ENCODE measurements at regions of chr1 and their contacts with region 1.

Region 1: GRCh38 chr1:212608209-212608955 is at the start of gene ATF3:
- DNase-seq: peak; percentile 99
- ATAC-seq: peak; percentile 91
- H3K4me3 ChIP-seq: peak within 1 kb of the TSS; percentile 77
- H3K27ac ChIP-seq: peak within 1 kb of the TSS; percentile 78
- H3K4me1 ChIP-seq: peaks cover 14% of the 10 kb centered on the region
- H3K27me3 ChIP-seq: peaks cover 42% of the 10 kb centered on the region
- CTCF ChIP-seq: no peak
- POLR2A ChIP-seq: peak; percentile 99
- RAD21 ChIP-seq: 0 out of 2 replicates have a peak, but pooled peaks have one; percentile 10
- total RNA-seq, gene ATF3: 9.9 and 15.0 TPM in 2 replicates

Region 2: DNA sequence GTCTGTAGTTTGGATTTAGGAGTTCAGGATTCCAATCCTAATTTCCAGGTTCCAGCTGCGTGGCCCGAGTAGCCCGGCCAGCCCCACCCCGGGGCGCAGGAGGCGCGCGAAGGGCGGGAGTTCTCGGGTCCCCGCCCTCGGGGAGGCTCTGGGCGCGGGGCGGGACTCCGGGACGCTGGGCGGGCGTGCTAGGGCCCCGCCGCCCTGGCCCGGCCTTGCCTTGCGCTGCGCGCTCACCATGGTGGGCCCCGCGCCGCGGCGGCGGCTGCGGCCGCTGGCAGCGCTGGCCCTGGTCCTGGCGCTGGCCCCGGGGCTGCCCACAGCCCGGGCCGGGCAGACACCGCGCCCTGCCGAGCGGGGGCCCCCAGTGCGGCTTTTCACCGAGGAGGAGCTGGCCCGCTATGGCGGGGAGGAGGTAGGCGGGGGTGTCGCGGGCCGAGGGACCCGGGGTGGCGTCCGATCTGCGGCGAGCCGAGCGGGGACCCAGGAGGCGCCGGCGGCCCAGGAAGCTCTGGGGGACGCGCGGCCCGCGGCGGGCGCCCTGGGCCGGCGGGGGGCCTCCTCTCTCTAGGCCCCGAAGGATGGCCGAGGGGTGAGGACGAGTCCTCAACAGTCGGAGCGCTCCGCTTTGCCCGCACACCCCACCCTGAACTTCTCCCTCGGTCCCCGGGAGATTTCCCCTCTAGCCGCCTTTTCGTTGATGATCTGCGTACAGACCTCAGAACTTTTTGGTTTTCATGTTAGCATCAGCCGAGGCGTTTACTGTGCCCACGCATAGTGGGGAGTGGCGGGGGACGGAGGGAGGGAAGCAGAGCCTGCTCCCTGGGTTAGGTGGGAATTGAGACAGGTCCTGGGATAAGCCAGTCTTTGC is 175.4 kb before region 1 on chr1 and contains the start of gene NENF:
- CTCF ChIA-PET with region 1: no interaction called
- POLR2A ChIA-PET with region 1: no interaction called
- dilution Hi-C with region 1: no loop called
- in situ Hi-C with region 1: no loop called
- intact Hi-C with region 1: no loop called
- DNase-seq: peak; percentile 72
- ATAC-seq: peak; percentile 99
- H3K4me3 ChIP-seq: peak within 1 kb of the TSS; percentile 67
- H3K27ac ChIP-seq: peak within 1 kb of the TSS; percentile 48
- H3K4me1 ChIP-seq: peaks cover 13% of the 10 kb centered on the region; the same call in 1 of the 2 replicates
- H3K27me3 ChIP-seq: no peaks in the 10 kb centered on the region
- CTCF ChIP-seq: no peak
- POLR2A ChIP-seq: peak; percentile 47; the same call in 1 of the 2 replicates
- RAD21 ChIP-seq: no peak
- total RNA-seq, gene NENF: 15.0 and 16.0 TPM in 2 replicates

Region 3: DNA sequence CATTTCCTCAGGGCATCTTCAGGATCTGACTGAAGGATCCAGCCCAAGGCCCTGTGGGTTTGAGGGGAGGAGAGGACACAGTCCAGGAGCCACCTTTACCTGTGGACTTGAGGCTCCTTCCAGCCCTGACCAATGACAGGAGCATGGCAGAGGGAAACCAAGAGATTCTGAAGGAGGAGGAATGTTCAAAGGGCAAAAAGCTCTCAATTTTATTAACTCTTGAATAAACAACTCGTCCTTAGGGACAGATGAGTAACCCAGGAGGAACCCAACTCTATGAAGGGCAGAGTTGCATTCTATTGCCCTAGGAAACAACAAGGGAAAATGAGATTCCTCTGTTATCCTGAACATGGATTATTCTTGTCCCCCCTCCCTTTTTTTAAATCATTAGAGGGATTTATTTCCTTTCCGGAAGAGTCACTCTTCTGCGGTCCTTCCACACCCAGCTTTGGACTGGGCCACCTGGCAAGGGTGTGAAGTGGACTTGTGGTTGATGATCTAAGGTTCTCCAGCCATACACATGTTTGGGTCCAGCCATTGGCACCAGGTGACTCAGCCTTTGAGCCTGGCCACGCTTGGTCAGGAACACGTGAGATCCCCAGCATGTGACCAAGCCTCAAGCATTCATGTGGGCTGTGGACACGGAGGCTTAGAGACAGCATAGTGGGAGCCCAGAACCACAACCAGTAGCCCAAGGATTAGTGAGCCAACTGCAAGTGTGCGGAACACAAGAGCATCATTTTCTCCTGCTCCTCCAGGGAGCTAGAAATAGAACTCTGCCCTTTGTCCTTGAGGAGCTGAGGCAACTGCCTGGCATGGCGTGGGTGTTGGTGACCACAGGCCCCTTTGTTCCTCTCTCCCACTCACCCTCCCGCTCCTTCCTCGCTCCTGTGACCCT is 125.7 kb before region 1 on chr1:
- CTCF ChIA-PET with region 1: interaction called, 12 read pairs
- POLR2A ChIA-PET with region 1: interaction called, 5 read pairs
- dilution Hi-C with region 1: no loop called
- in situ Hi-C with region 1: no loop called
- intact Hi-C with region 1: loop called (anchors 1 kb)
- DNase-seq: peak; percentile 51
- ATAC-seq: peak; percentile 45
- H3K4me3 ChIP-seq: no peak overlapping the region
- H3K27ac ChIP-seq: no peak overlapping the region
- H3K4me1 ChIP-seq: peaks cover 18% of the 10 kb centered on the region
- H3K27me3 ChIP-seq: no peaks in the 10 kb centered on the region
- CTCF ChIP-seq: no peak
- POLR2A ChIP-seq: no peak
- RAD21 ChIP-seq: no peak

Region 4: DNA sequence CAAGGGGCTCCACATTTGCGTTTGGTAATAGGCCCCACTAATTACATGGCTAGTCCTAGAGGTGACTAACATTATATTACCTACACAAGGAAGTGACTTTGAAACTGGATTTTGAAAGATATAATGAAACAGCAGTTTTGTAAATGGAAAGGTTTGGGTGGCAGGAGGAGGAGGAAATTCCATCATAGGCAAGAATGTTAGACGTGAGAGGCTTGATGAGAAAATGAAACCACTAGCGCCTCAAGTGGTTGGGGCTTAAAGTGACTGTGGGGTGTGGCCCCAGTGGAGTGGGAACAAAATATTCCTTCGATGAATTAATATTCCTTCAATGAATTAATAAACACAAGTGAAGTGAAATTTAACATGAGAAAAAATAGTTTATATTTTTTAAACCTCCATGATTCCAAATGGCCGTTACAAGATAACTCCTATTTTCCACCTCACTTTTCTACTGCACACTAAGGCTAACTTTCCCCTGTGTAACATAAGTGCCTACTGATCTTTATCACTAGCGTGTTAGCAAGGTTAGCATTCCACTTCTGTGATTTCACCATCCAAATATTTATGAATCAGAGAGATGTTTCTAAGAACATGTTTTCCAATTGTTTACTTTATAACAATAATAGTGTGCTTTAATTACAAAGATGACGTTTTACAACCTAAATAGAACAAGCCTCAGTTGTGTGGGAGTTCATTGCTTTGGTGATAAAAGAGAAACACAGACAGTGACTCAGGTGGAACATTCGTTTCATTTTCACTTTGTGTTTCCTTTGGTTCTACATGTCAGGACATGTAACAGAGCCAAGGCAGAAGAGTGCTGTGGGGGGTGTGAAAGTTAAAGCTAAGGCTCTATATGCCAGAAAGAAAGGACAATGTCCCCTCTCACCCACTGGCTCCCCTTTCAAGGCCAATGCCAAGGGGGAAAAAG is 12.3 kb before region 1 on chr1:
- CTCF ChIA-PET with region 1: interaction called, 4 read pairs
- POLR2A ChIA-PET with region 1: interaction called, 7 read pairs
- dilution Hi-C with region 1: no loop called
- in situ Hi-C with region 1: no loop called
- intact Hi-C with region 1: loop called (anchors 1 kb)
- DNase-seq: peak; percentile 99
- ATAC-seq: peak; percentile 90
- H3K4me3 ChIP-seq: peak overlapping the region; percentile 31; the same call in 1 of the 2 replicates
- H3K27ac ChIP-seq: peak overlapping the region; percentile 98
- H3K4me1 ChIP-seq: peaks cover 10% of the 10 kb centered on the region
- H3K27me3 ChIP-seq: peaks cover 9% of the 10 kb centered on the region
- CTCF ChIP-seq: peak; percentile 75
- POLR2A ChIP-seq: peak; percentile 14; the same call in 1 of the 2 replicates
- RAD21 ChIP-seq: peak; percentile 68

Region 5: DNA sequence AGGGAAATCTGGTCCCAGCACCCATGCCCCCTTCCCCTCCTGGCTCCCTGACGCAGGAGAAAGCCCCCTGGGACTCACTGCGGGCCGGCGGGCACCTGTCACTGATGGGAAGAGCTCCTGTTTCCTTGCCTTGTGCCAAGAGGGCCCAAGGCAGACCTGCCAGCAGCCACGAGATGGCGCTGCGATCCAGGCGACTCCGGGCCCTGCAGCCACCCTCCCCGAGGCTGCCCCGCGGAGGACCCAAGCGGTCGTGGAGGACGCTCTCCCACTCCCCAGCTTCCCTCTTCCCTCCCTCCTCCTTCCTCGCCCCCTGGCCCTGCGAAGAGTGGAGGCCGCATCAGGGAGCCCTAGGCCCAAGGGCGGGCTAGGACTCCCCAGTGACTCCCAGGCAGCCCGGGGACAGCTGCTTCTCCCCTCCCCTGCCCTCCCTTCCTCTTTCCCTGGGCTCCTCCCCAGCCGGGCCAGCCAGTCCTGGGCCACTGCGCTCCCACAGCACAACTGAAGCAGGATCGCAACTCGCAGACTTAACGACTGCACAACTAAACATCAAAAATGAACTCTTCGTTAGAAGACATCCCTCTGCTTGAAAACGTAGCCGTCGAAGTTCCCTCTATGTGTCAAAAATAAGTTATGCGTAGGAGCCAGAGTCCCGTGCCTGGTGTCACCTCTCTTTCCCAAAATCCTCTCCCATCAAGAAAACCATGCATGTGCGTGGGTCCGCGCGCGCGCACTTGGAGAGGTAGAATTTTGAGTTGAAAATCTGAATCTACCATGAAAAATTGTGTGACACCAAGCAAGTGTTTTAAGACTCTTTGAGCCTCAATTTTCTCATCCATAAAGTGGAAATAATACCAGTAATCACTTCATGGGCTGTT is 57.1 kb after region 1 on chr1:
- CTCF ChIA-PET with region 1: interaction called, 4 read pairs
- POLR2A ChIA-PET with region 1: interaction called, 3 read pairs
- dilution Hi-C with region 1: no loop called
- in situ Hi-C with region 1: no loop called
- intact Hi-C with region 1: loop called (anchors 2 kb)
- DNase-seq: peak; percentile 77
- ATAC-seq: peak; percentile 91
- H3K4me3 ChIP-seq: peak overlapping the region; percentile 66
- H3K27ac ChIP-seq: peak overlapping the region; percentile 72
- H3K4me1 ChIP-seq: peaks cover 7% of the 10 kb centered on the region
- H3K27me3 ChIP-seq: no peaks in the 10 kb centered on the region
- CTCF ChIP-seq: peak; percentile 93
- POLR2A ChIP-seq: peak; percentile 53
- RAD21 ChIP-seq: peak; percentile 95

Region 6: GRCh38 chr1:212782422-212783154 is 174.2 kb after region 1 on chr1:
- CTCF ChIA-PET with region 1: interaction called, 3 read pairs
- POLR2A ChIA-PET with region 1: no interaction called
- dilution Hi-C with region 1: no loop called
- in situ Hi-C with region 1: no loop called
- intact Hi-C with region 1: loop called (anchors 2 kb)
- DNase-seq: peak; percentile 69
- ATAC-seq: peak; percentile 81
- H3K4me3 ChIP-seq: no peak overlapping the region
- H3K27ac ChIP-seq: no peak overlapping the region
- H3K4me1 ChIP-seq: 0 out of 2 replicates have a peak, but pooled peaks cover 2% of the 10 kb centered on the region
- H3K27me3 ChIP-seq: no peaks in the 10 kb centered on the region
- CTCF ChIP-seq: peak; percentile 72
- POLR2A ChIP-seq: no peak
- RAD21 ChIP-seq: peak; percentile 77